ENCODE measurements at regions of chr16 and their contacts with region 1.

Region 1: GRCh38 chr16:11255737-11256660 is at the start of gene SOCS1:
- DNase-seq: peak; percentile 91
- ATAC-seq: peak; percentile 84
- total RNA-seq, gene SOCS1: 4.3 TPM

Region 2: GRCh38 chr16:9840761-9841665 is 1415.0 kb before region 1 on chr16:
- intact Hi-C with region 1: loop called (anchors 5 kb)
- DNase-seq: no peak
- ATAC-seq: no peak

Region 3: DNA sequence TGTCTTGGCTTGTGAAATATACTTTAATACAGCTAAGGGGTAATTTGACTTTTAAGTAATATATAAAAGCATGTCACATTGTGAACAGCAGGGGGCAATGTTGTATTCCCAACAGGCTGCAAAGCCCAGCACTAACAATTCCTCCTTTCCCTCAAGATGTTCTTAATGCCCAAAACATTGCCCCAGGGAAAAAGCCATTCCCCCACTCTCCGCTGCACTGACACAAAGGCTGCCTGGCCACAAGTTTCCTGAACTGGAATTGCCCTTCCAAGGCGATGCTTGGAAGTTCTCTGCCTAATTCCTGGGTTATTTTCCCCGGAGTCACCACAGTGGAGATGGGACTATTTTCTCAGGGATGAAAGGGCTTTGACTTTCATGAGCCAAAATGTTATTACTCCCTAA is 284.4 kb before region 1 on chr16:
- intact Hi-C with region 1: loop called (anchors 2 kb)
- DNase-seq: no peak
- ATAC-seq: peak; percentile 90

Region 4: DNA sequence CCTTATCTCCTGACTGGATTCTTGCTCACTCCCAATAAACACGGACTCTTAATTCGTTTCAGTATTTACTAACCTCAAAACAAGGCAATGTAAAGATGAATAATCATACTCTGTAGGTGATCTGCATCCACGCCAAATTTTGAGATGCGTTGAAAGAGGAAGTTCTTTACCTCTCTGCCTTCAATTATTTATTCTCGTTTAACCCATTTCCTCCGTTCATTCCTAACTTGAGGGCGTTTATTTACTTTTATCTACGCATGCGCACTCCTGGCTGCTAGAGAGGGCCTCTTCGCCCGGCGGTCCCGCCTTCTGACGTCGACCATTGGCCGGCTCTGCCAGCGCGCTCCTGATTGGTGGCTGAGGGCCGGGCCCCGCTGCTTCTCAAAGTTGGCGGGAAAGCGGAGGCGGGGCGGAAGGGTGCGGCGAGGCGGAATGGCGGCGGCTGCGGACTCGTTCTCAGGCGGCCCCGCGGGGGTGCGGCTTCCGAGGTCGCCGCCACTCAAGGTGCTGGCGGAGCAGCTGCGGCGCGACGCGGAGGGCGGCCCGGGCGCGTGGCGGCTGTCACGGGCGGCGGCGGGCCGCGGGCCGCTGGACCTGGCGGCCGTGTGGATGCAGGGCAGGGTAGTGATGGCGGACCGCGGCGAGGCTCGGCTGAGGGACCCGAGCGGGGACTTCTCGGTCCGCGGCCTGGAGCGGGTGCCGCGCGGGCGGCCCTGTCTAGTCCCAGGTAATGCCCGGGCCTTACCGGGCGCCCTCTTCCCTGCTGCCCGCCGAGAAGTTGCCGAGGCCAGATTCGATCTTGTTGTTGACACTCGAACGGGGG is 89.3 kb after region 1 on chr16 and contains the start of gene RMI2:
- intact Hi-C with region 1: loop called (anchors 10 kb)
- DNase-seq: peak; percentile 97
- ATAC-seq: peak; percentile 98
- total RNA-seq, gene RMI2: 1.5 TPM

Measured in sciatic nerve (tissue), 2 donors.